Thyroid gland (tissue), 4 donors: ENCODE measurements at regions of chr19 and their contacts with region 1.

Region 1: GRCh38 chr19:51097166-51097738 is 11.0 kb downstream of the CTU1 start:
- DNase-seq: peak; percentile 49 to 75
- H3K4me3 ChIP-seq: no peak overlapping the region
- H3K27ac ChIP-seq: no peak overlapping the region
- H3K4me1 ChIP-seq: peaks cover 21 to 25% of the 10 kb centered on the region in 2 donors
- H3K27me3 ChIP-seq: no peaks in the 10 kb centered on the region
- CTCF ChIP-seq: peak in 5 of 6 experiments; percentile 35 to 78 (median 50)
- POLR2A ChIP-seq: no peak

Region 2: DNA sequence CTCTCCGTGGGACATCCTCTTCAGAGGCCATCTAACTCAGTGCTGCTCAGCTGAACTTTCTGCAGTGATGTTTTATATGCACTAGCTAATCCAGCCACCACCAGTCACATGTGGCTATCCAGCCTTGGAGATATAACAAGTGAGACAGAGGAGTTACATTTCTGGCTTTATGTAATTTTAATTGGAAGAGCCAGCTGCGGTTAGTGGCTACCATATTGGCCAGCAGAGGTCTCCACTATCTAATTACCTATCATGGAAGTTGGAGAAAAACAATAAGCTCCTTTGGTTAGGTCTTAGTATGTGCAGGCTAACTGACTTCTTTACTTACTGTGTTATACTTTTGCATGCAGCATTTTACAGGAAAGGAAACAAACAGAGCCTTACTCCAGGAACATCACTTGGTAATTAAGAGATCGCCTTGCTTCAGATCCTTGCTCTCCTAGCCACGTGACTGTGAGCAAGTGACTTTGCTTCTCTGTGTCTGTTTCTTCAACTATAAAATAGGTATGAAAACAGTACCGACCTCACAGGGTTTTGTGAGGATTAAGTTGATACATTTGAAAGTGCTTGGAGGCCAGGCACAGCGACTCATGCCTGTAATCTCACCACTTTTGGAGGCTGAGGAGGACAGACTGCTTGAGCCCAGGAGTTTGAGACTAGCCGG is 76.1 kb before region 1 on chr19:
- intact Hi-C with region 1: loop called (anchors 5 kb)
- DNase-seq: peak; percentile 14 to 18
- H3K4me3 ChIP-seq: no peak overlapping the region
- H3K27ac ChIP-seq: no peak overlapping the region
- H3K4me1 ChIP-seq: peaks cover 5 to 20% of the 10 kb centered on the region in 2 donors
- H3K27me3 ChIP-seq: peaks cover 24% of the 10 kb centered on the region
- CTCF ChIP-seq: peak in 5 of 6 experiments; percentile 24 to 68 (median 65)
- POLR2A ChIP-seq: no peak

Region 3: GRCh38 chr19:51194527-51195317 is 97.5 kb after region 1 on chr19:
- intact Hi-C with region 1: no loop called
- DNase-seq: no peak
- H3K4me3 ChIP-seq: no peak overlapping the region
- H3K27ac ChIP-seq: no peak overlapping the region
- H3K4me1 ChIP-seq: no peaks in the 10 kb centered on the region
- H3K27me3 ChIP-seq: no peaks in the 10 kb centered on the region
- CTCF ChIP-seq: no peak
- POLR2A ChIP-seq: no peak